Calu3 (cell line): ENCODE measurements at regions of chr3 and their contacts with region 1.

Region 1: GRCh38 chr3:119240591-119241434 is at the start of gene B4GALT4:
- DNase-seq: peak; percentile 91
- H3K4me3 Mint-ChIP-seq: peak within 1 kb of the TSS; percentile 96
- H3K27ac Mint-ChIP-seq: peak within 1 kb of the TSS; percentile 89
- H3K4me1 Mint-ChIP-seq: no peaks in the 10 kb centered on the region
- H3K27me3 Mint-ChIP-seq: no peaks in the 10 kb centered on the region
- CTCF ChIP-seq: no peak
- total RNA-seq, gene B4GALT4: 38.7 and 48.1 TPM in 2 replicates

Region 2: DNA sequence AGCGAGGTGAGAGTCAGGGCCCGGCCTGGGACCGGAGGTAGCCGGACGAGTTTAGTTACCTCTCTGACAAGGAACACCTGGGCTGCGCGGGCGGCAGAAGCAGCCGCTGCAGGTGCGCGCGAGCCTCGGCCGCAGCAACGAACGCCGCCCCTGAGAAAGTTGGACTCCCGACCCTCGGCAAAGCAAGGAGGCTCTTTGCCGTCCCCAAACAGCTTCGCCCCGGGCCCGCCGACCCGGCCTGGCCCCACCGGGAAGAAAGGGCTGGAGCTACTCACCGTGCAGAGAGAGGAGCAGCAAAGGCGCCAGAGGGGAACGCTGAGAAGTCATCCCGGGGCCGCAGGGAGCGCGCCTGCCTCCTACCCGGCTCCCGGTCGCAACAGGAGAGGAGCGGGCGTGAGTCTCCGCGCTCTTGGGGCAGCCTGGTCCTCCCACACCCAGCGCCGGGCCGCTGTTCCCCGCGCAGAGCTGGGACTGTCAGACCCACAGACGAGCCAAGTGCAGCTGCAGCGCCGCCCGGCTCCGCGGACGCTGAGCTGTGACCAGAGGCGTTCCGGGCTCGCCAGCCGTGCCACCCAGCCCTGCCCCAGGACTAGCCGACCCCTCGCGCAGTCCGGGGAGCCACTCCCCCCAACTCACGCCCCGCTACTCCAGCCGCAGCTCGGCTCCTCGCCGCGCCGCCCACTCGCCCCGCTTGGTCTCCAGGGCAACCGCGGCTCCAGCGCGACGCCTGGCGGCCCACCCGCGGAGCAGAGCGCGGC is 206.4 kb before region 1 on chr3 and contains the start of gene IGSF11:
- CTCF ChIA-PET with region 1: interaction called, 3 read pairs
- intact Hi-C with region 1: loop called (anchors 5 kb)
- DNase-seq: peak; percentile 79
- H3K4me3 Mint-ChIP-seq: peak within 1 kb of the TSS; percentile 79
- H3K27ac Mint-ChIP-seq: no peak within 1 kb of the TSS
- H3K4me1 Mint-ChIP-seq: peaks cover 8% of the 10 kb centered on the region
- H3K27me3 Mint-ChIP-seq: peaks cover 13% of the 10 kb centered on the region
- CTCF ChIP-seq: no peak
- total RNA-seq, gene IGSF11: 0.45 and 0.56 TPM in 2 replicates

Region 3: DNA sequence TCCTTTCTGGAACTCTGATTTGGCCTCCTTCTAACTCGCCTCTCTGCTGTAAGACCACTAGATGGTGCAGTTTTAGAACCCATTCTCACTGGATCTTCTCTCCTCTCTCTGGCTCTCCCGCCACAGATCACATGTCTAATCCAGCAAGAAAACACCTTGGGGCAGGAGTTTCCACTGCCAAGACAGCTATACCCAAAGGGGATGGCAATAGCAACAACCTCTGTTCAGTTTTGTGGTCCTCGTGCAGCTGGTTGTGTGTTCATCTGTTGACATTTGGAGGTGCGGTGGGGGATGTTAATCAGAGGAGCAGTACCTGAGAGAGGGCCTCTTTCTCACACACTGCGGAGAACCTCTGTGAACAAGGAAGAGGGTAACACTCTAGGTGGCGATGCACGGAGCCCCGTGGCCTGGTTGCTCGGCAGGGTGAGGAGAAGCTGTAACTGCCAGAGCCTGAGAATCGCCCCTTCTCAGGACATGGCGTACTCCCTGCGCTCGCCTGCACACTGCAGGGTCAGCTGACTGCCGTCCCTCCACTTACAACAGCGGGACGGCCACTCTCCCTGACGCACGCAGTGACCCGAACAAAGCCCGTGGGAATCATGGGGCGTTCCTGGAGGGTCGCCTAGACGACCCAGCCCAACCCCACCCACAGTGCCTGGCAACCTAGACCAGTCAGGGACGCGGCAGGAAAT is 95.2 kb before region 1 on chr3 and contains the start of gene TEX55:
- CTCF ChIA-PET with region 1: interaction called, 15 read pairs
- intact Hi-C with region 1: loop called (anchors 1 kb)
- DNase-seq: peak; percentile 35
- H3K4me3 Mint-ChIP-seq: no peak within 1 kb of the TSS
- H3K27ac Mint-ChIP-seq: peak within 1 kb of the TSS; percentile 21
- H3K4me1 Mint-ChIP-seq: peaks cover 18% of the 10 kb centered on the region
- H3K27me3 Mint-ChIP-seq: no peaks in the 10 kb centered on the region
- CTCF ChIP-seq: no peak
- total RNA-seq, gene TEX55: not detected in 2 replicates

Region 4: GRCh38 chr3:119206611-119207511 is 34.0 kb before region 1 on chr3:
- CTCF ChIA-PET with region 1: interaction called, 19 read pairs
- intact Hi-C with region 1: loop called (anchors 2 kb)
- DNase-seq: peak; percentile 39
- H3K4me3 Mint-ChIP-seq: peak overlapping the region; percentile 12
- H3K27ac Mint-ChIP-seq: peak overlapping the region; percentile 26
- H3K4me1 Mint-ChIP-seq: peaks cover 62% of the 10 kb centered on the region
- H3K27me3 Mint-ChIP-seq: no peaks in the 10 kb centered on the region
- CTCF ChIP-seq: no peak